B cell (primary cell): ENCODE measurements at regions of chr17 and their contacts with region 1.

Region 1: DNA sequence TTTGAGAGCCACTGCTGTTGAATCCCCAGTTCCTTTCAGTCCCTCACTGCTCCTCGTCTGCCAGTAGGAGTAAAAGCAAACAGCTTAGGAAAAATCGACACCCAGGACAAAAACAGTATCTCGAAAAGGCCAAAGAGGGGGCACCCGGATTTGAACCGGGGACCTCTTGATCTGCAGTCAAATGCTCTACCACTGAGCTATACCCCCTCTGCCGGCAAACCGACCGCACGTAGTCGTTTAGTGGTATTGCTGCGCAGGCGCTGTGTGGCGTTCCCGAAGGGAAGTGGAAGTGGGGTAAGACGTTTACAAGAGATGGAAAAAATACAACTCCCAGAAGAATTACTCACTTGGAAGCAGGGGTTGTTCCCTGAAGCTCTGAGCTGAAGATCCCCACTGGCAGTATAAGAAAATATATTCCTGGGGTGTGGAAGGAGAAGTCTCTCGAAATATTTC is 2.2 kb upstream of the PLXDC1 start:
- DNase-seq: peak; percentile 94
- ATAC-seq: peak; percentile 59
- H3K4me3 ChIP-seq: peak overlapping the region; percentile 62 to 93 (median 82)
- H3K4me3 Mint-ChIP-seq: peak overlapping the region; percentile 94
- H3K27ac ChIP-seq: peak overlapping the region; percentile 53 to 62
- H3K27ac Mint-ChIP-seq: peak overlapping the region; percentile 99
- H3K4me1 ChIP-seq: peaks cover 25 to 34% of the 10 kb centered on the region in 2 donors
- H3K4me1 Mint-ChIP-seq: peaks cover 30% of the 10 kb centered on the region
- H3K27me3 ChIP-seq: peaks cover 0 to 34% (median 17%) of the 10 kb centered on the region in 4 experiments
- H3K27me3 Mint-ChIP-seq: peaks cover 30% of the 10 kb centered on the region
- CTCF ChIP-seq: no peak

Region 2: DNA sequence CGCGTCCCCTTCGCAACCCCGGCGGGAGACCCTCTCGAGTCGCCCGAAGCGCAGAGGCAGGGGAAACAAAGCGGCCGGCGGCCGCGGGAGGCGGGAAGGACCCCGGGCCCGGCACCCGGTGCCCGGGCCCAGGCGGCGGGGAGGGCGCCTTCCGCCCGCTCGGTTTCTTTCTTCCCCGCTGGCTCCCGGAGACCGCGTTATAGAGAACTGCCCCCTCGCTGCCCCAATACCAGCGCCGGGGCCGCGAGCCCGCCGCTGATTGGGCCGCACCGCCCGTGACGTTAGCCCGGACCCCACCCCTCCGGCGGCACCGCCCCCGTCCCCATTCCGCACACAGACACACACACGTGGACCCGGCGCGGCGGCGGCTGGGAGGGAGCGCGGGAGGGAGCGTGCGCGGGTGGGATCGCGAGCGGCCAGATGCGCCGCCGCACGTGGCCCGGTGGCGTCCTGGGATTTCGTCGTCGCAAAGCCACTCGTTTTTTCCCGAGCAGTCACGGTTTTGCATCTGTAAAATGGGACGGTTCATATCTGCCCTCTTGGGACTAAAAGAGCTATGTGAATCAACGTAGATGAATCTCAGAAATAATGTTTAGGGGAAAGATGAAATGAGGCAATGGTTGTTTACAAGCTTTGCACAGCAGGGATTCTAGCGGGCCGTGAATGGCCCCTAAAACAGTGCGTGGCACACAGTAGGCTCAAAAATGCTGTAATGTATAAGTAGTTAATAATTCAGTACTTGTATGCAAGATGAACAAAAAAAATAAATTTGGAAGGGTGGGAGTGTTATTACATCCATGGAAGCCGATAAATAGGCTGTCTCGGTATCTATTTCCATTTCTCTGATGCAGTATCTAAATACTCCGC is 478.6 kb before region 1 on chr17 and contains the start of gene EPOP:
- CTCF ChIA-PET with region 1: no interaction called
- POLR2A ChIA-PET with region 1: no interaction called
- intact Hi-C with region 1: loop called (anchors 2 kb)
- DNase-seq: peak; percentile 85
- ATAC-seq: peak; percentile 85
- H3K4me3 ChIP-seq: peak within 1 kb of the TSS; percentile 16 to 68 (median 56)
- H3K4me3 Mint-ChIP-seq: peak within 1 kb of the TSS; percentile 87
- H3K27ac ChIP-seq: no peak within 1 kb of the TSS
- H3K27ac Mint-ChIP-seq: peak within 1 kb of the TSS; percentile 63
- H3K4me1 ChIP-seq: peaks cover 27 to 40% of the 10 kb centered on the region in 2 donors
- H3K4me1 Mint-ChIP-seq: peaks cover 29% of the 10 kb centered on the region
- H3K27me3 ChIP-seq: peaks cover 0 to 52% (median 26%) of the 10 kb centered on the region in 4 experiments
- H3K27me3 Mint-ChIP-seq: peaks cover 38% of the 10 kb centered on the region
- CTCF ChIP-seq: no peak
- total RNA-seq, gene EPOP: 0.97 and 1.2 TPM in 2 replicates

Region 3: DNA sequence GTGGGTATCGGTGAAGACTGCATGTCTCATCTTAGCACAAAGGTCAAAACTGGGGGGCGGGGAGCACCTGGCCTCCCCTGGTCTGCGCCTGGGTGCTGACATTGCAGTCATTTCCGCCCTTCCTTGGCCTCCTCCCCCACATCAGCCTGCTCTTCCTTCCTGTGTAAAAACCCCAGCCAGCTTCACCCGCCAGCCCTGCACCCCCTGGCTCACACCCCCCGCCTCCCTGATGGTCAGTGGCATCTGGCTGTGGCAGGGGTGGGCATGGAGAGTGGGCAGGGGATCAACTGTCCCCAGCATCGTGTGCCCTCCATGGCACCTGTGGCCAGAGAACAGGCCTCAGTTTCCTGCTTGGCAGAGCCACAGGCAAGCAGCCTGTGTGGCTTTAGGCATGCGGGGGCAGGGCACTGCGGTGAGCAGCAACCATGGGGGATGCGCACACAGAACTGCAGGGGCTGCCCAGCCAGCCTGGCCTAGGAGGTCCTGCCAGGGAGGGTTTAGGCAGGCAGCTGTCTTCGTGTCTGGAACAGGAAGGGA is 254.7 kb before region 1 on chr17:
- CTCF ChIA-PET with region 1: interaction called, 11 read pairs
- POLR2A ChIA-PET with region 1: no interaction called
- intact Hi-C with region 1: no loop called
- DNase-seq: peak; percentile 85
- ATAC-seq: peak; percentile 92
- H3K4me3 ChIP-seq: peak overlapping the region; percentile 23 to 55 (median 36)
- H3K4me3 Mint-ChIP-seq: peak overlapping the region; percentile 91
- H3K27ac ChIP-seq: peak overlapping the region; percentile 90 to 96
- H3K27ac Mint-ChIP-seq: peak overlapping the region; percentile 99
- H3K4me1 ChIP-seq: peaks cover 29 to 45% of the 10 kb centered on the region in 2 donors
- H3K4me1 Mint-ChIP-seq: peaks cover 30% of the 10 kb centered on the region
- H3K27me3 ChIP-seq: no peaks in the 10 kb centered on the region
- H3K27me3 Mint-ChIP-seq: no peaks in the 10 kb centered on the region
- CTCF ChIP-seq: no peak

Region 4: GRCh38 chr17:38982858-38983746 is 170.5 kb before region 1 on chr17:
- CTCF ChIA-PET with region 1: interaction called, 259 read pairs
- POLR2A ChIA-PET with region 1: interaction called, 13 read pairs
- intact Hi-C with region 1: loop called (anchors 1 kb)
- DNase-seq: peak; percentile 76
- ATAC-seq: peak; percentile 24
- H3K4me3 ChIP-seq: no peak overlapping the region
- H3K4me3 Mint-ChIP-seq: no peak overlapping the region
- H3K27ac ChIP-seq: no peak overlapping the region
- H3K27ac Mint-ChIP-seq: no peak overlapping the region
- H3K4me1 ChIP-seq: no peaks in the 10 kb centered on the region
- H3K4me1 Mint-ChIP-seq: peaks cover 2% of the 10 kb centered on the region
- H3K27me3 ChIP-seq: peaks cover 0 to 3% (median 0%) of the 10 kb centered on the region in 4 experiments
- H3K27me3 Mint-ChIP-seq: peaks cover 16% of the 10 kb centered on the region
- CTCF ChIP-seq: peak; percentile 82

Region 5: DNA sequence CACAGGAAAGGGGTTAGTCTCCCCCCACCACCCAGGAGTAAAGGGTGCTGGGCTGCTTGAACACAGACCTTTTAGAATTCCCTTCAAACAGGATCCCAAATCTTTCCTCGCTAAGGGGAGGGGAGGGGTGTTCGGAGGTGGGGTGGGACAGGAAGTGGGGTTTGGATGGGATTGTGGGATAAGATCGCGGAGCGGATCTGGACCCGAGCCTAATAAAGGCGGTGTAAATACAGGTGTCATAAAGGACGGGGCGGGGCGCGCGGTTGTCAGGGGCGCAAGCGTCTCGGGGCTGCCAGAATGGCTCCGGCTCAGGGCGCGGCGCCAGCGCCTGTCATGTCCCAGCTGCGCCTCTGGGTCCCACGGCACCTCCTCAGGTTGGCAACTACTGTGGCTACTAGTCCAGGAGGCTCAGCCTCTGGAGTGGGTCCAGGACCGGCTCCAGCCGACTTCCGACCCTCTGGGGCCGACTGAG is 126.6 kb before region 1 on chr17:
- CTCF ChIA-PET with region 1: no interaction called
- POLR2A ChIA-PET with region 1: no interaction called
- intact Hi-C with region 1: no loop called
- DNase-seq: no peak
- ATAC-seq: no peak
- H3K4me3 ChIP-seq: no peak overlapping the region
- H3K4me3 Mint-ChIP-seq: no peak overlapping the region
- H3K27ac ChIP-seq: no peak overlapping the region
- H3K27ac Mint-ChIP-seq: no peak overlapping the region
- H3K4me1 ChIP-seq: peaks cover 7 to 8% of the 10 kb centered on the region in 2 donors
- H3K4me1 Mint-ChIP-seq: peaks cover 5% of the 10 kb centered on the region
- H3K27me3 ChIP-seq: peaks cover 0 to 35% (median 10%) of the 10 kb centered on the region in 4 experiments
- H3K27me3 Mint-ChIP-seq: peaks cover 30% of the 10 kb centered on the region
- CTCF ChIP-seq: no peak

Region 6: DNA sequence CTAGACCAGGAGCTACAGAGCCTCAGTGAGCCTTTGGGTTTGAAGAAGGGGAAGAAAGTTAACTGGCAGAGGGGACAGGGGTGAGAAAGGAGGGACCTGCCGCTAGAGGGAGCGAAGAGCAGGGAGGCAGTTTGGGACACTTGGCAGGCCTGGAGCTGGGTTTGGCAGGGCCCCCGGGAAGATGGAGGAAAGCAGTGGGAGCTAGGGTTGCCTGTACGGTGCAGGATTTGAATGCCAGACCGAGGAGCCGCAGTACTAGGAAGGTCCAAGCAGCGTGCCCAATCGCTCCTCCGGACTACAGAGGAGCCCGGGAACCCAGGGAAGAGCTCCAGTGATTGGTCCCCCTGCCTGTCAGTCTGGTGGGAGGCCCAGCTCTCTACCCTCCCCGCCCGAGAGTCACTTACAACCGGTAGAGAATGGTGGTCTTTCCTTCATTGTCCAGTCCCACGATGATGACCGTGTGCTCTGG is 11.1 kb after region 1 on chr17:
- CTCF ChIA-PET with region 1: interaction called, 60 read pairs
- POLR2A ChIA-PET with region 1: interaction called, 10 read pairs
- intact Hi-C with region 1: loop called (anchors 1 kb)
- DNase-seq: peak; percentile 86
- ATAC-seq: peak; percentile 89
- H3K4me3 ChIP-seq: peak overlapping the region; percentile 36 to 74 (median 69)
- H3K4me3 Mint-ChIP-seq: peak overlapping the region; percentile 90
- H3K27ac ChIP-seq: no peak overlapping the region
- H3K27ac Mint-ChIP-seq: peak overlapping the region; percentile 29
- H3K4me1 ChIP-seq: peaks cover 27 to 29% of the 10 kb centered on the region in 2 donors
- H3K4me1 Mint-ChIP-seq: peaks cover 28% of the 10 kb centered on the region
- H3K27me3 ChIP-seq: peaks cover 0 to 38% (median 10%) of the 10 kb centered on the region in 4 experiments
- H3K27me3 Mint-ChIP-seq: peaks cover 14% of the 10 kb centered on the region
- CTCF ChIP-seq: peak; percentile 85

Region 7: DNA sequence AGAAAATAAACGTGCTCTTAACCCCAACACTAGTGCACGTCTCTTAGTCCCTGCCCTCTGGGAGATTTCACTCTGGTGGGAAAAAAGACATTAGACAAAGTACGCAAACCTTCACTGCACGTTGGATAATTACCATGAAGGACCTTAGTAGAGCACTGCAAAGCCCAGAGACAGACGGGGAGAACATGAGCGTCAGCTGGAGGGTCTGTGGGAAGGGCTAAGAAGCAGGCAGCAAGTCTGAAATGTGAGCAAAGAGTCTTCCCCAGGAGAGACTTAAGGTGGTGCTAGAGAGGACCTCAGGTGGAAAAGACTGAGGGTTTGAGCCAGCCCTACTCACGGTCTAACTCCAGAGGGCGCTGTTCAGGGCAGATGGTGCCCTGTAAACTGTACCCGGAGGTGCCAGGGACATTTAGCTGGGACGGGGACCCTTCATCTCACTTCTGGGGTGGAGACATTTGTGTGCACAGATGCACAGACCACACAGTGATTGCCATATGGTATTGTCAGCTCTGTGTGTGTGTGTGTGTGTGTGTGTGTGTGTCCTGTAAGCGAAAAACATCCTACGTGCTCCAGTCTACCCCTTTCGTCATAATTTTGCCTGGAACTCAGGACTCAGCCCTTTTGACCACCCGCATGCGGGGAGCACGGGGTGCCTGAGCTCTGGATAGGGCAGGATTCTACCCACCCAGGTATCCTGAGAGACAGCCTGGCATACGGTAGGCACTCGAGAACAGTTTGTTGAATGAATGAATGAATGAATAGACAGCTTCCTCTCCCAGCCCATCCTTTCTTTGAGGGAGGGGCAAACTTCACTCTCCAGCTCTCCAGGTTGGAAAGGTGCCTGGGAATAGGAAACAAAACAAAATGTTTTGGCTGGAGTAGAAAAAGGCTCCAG is 82.2 kb after region 1 on chr17:
- CTCF ChIA-PET with region 1: interaction called, 13 read pairs
- POLR2A ChIA-PET with region 1: no interaction called
- intact Hi-C with region 1: loop called (anchors 5 kb)
- DNase-seq: peak; percentile 63
- ATAC-seq: peak; percentile 22
- H3K4me3 ChIP-seq: no peak overlapping the region
- H3K4me3 Mint-ChIP-seq: no peak overlapping the region
- H3K27ac ChIP-seq: no peak overlapping the region
- H3K27ac Mint-ChIP-seq: peak overlapping the region; percentile 56
- H3K4me1 ChIP-seq: peaks cover 25 to 35% of the 10 kb centered on the region in 2 donors
- H3K4me1 Mint-ChIP-seq: peaks cover 31% of the 10 kb centered on the region
- H3K27me3 ChIP-seq: peaks cover 0 to 17% (median 16%) of the 10 kb centered on the region in 4 experiments
- H3K27me3 Mint-ChIP-seq: peaks cover 22% of the 10 kb centered on the region
- CTCF ChIP-seq: peak; percentile 57